Naive thymus-derived CD4-positive, alpha-beta T cell (primary cell): ENCODE measurements at regions of chr11 and their contacts with region 1.

Region 1: GRCh38 chr11:132704781-132705375 is 827.4 kb downstream of the OPCML start:
- DNase-seq: no peak
- ATAC-seq: no peak
- H3K4me3 ChIP-seq: no peak overlapping the region
- H3K4me3 Mint-ChIP-seq: no peak overlapping the region
- H3K27ac ChIP-seq: no peak overlapping the region
- H3K27ac Mint-ChIP-seq: no peak overlapping the region
- H3K4me1 ChIP-seq: no peaks in the 10 kb centered on the region
- H3K4me1 Mint-ChIP-seq: no peaks in the 10 kb centered on the region
- H3K27me3 ChIP-seq: no peaks in the 10 kb centered on the region
- H3K27me3 Mint-ChIP-seq: peaks cover 0 to 4% (median 3%) of the 10 kb centered on the region in 5 donors

Region 2: DNA sequence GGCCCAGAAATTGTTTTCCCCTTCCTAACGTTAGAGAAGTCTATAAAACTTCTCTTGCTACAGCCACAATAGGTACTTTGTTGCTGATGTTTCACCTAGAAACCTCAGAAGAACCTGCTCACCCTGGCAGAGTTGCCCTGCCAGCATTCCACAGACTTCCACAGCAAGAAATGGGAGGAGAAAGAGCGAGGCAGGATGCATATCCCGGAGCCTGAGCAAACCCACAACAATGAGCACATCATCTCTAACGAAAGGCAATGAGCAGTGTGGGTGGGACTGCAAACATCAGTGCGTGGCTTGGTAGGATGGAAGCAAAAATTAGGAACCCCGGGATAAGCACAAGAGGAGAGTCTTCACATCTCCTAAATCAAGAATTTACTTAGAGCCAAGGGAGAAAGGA is 64.9 kb before region 1 on chr11:
- CTCF ChIA-PET with region 1: no interaction called
- POLR2A ChIA-PET with region 1: no interaction called
- intact Hi-C with region 1: loop called in 1 of 2 experiments (anchors 2 kb)
- DNase-seq: no peak
- ATAC-seq: no peak
- H3K4me3 ChIP-seq: no peak overlapping the region
- H3K4me3 Mint-ChIP-seq: no peak overlapping the region
- H3K27ac ChIP-seq: no peak overlapping the region
- H3K27ac Mint-ChIP-seq: no peak overlapping the region
- H3K4me1 ChIP-seq: no peaks in the 10 kb centered on the region
- H3K4me1 Mint-ChIP-seq: peaks cover 0 to 2% (median 0%) of the 10 kb centered on the region in 7 donors
- H3K27me3 ChIP-seq: no peaks in the 10 kb centered on the region
- H3K27me3 Mint-ChIP-seq: peaks cover 0 to 10% (median 0%) of the 10 kb centered on the region in 5 donors

Region 3: DNA sequence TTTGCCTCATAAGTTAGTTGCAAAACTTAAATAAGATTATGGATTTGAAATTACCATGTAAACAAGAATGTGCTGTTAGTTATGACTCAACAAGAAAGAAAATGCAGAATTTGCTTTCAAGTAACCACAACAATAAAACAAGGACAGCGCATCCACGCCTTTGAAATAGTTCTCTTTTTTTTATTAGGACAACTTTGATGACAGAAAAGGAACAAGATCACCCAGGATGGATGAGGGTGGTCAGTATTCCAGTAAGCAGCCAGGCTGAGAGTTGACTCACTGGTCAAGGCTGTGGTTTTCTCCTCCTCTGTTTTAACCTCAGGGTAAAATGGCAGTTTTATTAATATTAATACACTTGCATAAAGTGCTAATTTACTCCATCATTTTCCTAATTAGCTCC is 283.1 kb after region 1 on chr11:
- CTCF ChIA-PET with region 1: no interaction called
- POLR2A ChIA-PET with region 1: no interaction called
- intact Hi-C with region 1: no loop called
- DNase-seq: no peak
- ATAC-seq: no peak
- H3K4me3 ChIP-seq: no peak overlapping the region
- H3K4me3 Mint-ChIP-seq: no peak overlapping the region
- H3K27ac ChIP-seq: no peak overlapping the region
- H3K27ac Mint-ChIP-seq: no peak overlapping the region
- H3K4me1 ChIP-seq: no peaks in the 10 kb centered on the region
- H3K4me1 Mint-ChIP-seq: no peaks in the 10 kb centered on the region
- H3K27me3 ChIP-seq: no peaks in the 10 kb centered on the region
- H3K27me3 Mint-ChIP-seq: peaks cover 0 to 11% (median 5%) of the 10 kb centered on the region in 5 donors